ENCODE measurements at regions of chr22 and their contacts with region 1.

Region 1: GRCh38 chr22:29031227-29032011 is 30.2 kb downstream of the C22orf31 start:
- DNase-seq: peak; percentile 95
- H3K4me3 Mint-ChIP-seq: peak overlapping the region; percentile 83
- H3K27ac Mint-ChIP-seq: peak overlapping the region; percentile 97
- H3K4me1 Mint-ChIP-seq: peaks cover 22% of the 10 kb centered on the region
- H3K27me3 Mint-ChIP-seq: no peaks in the 10 kb centered on the region
- CTCF ChIP-seq: no peak

Region 2: DNA sequence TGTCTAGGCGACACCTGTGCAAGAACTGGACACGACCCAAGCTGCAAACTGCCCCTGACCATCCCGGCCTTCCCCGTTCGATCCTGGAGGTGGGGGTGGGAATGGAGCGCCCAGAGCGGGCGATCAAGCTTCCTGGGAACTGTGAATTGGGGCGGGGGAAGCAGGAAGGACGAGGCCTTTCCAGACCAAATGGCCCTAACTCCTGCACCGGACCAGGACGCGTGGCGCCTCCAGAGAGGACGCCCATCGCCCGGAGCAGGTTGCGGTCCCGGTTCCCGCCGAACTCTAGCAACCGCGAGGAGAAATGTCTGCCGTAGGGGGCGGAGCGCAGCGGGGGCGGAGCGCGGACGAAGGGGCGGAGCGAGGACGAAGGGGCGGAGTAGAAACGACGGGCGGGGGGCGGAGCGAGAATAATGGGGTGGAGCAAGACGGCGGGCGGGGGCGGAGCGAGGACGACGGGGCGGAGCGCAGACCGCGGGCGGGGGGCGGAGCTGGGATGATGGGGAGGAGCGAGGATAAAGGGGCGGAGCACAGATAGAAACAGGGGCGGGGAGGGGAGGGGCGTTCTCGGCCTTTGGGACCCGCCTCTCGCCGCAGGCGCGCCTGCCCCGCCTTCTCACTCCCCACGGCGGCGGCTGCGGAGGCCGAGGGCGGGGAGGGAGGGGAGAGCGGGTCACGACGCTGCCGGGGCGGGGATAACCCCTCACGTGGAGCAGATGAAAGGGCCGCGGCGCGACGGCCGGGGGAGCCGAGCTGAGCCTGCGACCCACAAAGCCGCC is 148.4 kb before region 1 on chr22 and contains the start of gene ZNRF3:
- CTCF ChIA-PET with region 1: interaction called, 3 read pairs
- POLR2A ChIA-PET with region 1: interaction called, 7 read pairs
- intact Hi-C with region 1: loop called (anchors 1 kb)
- DNase-seq: peak; percentile 92
- H3K4me3 Mint-ChIP-seq: peak within 1 kb of the TSS; percentile 78
- H3K27ac Mint-ChIP-seq: no peak within 1 kb of the TSS
- H3K4me1 Mint-ChIP-seq: peaks cover 12% of the 10 kb centered on the region
- H3K27me3 Mint-ChIP-seq: no peaks in the 10 kb centered on the region
- CTCF ChIP-seq: no peak
- total RNA-seq, gene ZNRF3: 7.1 and 7.9 TPM in 2 replicates

Region 3: DNA sequence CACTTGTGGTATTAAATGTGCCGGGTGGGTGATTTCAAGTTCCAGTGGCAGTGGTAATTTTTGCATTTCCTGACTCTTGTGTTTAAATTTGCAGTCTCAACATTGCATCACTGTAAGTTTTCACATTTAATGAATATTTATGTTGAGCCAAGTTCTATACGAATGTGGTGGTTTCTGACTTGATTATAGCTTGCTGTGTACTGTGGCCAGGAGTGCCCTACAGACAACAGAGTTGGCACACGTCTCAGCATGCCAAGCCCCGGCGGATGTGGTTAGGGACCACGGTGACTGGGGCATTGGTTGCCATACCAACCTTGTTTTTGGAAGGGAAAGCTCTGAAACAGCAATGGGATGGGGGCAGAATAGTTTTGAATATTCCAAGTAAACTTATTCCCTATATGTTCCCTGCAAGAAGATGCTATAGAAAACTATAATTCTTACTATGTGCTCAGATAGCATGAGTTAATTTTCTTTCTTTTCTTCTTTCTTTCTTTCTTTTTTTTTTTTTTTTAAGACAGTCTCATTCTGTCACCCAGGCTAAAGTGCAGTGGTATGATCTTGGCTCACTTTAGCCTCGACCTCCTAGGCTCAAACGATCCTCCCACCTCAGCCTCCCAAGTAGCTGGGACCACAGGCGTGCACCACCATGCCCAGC is 132.1 kb before region 1 on chr22:
- CTCF ChIA-PET with region 1: interaction called, 3 read pairs
- POLR2A ChIA-PET with region 1: interaction called, 3 read pairs
- intact Hi-C with region 1: loop called (anchors 5 kb)
- DNase-seq: peak; percentile 70
- H3K4me3 Mint-ChIP-seq: no peak overlapping the region
- H3K27ac Mint-ChIP-seq: peak overlapping the region; percentile 27
- H3K4me1 Mint-ChIP-seq: peaks cover 21% of the 10 kb centered on the region
- H3K27me3 Mint-ChIP-seq: no peaks in the 10 kb centered on the region
- CTCF ChIP-seq: no peak